Heart left ventricle (tissue), 16 donors: ENCODE measurements at regions of chr1 and their contacts with region 1.

Region 1: DNA sequence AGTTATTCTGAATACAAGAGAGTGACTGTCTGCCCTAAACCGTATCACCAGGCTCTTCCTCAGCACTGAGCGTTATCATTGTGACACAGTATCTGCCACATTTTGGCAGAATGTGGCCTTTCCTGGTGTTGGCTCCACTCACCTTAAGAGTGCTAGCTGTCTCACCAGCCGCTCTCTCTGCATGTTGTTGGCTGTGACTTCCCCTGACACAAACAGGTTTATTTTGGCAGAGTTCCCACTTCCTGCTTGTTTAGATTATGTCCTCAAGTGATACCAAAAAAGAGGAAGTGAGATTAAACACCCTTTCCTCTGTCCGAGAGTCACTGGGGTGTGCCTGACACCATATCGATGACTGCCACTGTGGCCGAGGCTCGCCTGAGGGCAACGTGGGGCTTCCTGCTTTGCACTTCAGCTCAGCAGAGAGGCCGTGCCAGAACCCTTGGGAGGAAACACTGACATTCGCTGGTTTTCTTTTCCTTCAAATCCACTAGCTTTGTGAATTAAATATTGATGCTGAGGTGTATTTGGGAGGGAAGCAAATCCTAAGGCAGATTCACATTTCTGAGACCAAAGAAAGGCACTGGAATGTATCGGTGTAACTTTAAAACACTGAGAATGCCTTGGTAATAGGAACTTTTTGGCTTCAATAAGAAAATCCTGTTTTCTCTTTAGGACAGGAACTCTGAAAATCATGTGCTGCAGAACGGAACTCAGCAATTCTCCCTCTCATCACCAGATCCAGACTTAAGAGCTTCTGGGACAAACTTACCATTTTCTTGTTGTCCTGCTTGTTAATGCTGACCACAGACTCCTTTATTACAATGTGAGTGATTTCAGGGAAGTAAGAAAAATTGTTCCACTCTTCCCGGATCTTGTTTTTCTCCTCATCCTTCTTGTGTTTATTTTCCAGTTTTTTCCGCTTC is 102.1 kb downstream of the JAK1 start:
- DNase-seq: peak; percentile 63 to 88 (median 77)
- ATAC-seq: peak; percentile 45 to 94 (median 85)
- H3K4me3 ChIP-seq: no peak overlapping the region
- H3K27ac ChIP-seq: peak overlapping the region in 9 of 12 donors; percentile 17 to 85 (median 39)
- H3K4me1 ChIP-seq: peaks cover 0 to 28% (median 5%) of the 10 kb centered on the region in 12 donors
- H3K27me3 ChIP-seq: no peaks in the 10 kb centered on the region
- CTCF ChIP-seq: no peak
- POLR2A ChIP-seq: no peak

Region 2: GRCh38 chr1:64923294-64923721 is 59.0 kb after region 1 on chr1:
- intact Hi-C with region 1: no loop called
- DNase-seq: no peak
- ATAC-seq: no peak
- H3K4me3 ChIP-seq: no peak overlapping the region
- H3K27ac ChIP-seq: no peak overlapping the region
- H3K4me1 ChIP-seq: peaks cover under 1 to 94% (median 50%) of the 10 kb centered on the region in 12 donors
- H3K27me3 ChIP-seq: no peaks in the 10 kb centered on the region
- CTCF ChIP-seq: no peak
- POLR2A ChIP-seq: no peak

Region 3: DNA sequence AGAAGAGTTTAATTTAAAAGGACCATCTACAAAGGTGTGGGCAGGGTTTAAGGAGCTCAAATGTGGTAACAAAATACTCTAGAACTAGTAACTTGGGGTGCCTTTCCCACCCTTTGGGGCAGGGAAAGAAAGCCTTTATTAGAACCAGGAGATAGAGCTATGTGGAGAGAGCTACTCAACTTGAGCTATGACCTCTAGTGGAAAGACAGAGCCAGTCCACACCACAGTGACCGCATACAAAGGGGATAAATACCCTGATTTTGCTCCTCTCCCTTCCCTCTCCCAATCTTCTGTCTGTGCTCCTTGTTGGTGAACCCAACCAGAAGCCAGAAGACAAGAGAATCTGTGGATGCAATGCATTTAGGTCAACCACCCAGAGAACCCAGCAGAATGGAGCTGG is 156.5 kb after region 1 on chr1:
- intact Hi-C with region 1: loop called in 1 of 10 experiments (anchors 5 kb)
- DNase-seq: no peak
- ATAC-seq: peak in 3 of 4 donors; percentile 55 to 73 (median 72)
- H3K4me3 ChIP-seq: no peak overlapping the region
- H3K27ac ChIP-seq: no peak overlapping the region
- H3K4me1 ChIP-seq: peaks cover 0 to 19% (median 4%) of the 10 kb centered on the region in 12 donors
- H3K27me3 ChIP-seq: no peaks in the 10 kb centered on the region
- CTCF ChIP-seq: peak in 9 of 12 donors; percentile 13 to 41 (median 30)
- POLR2A ChIP-seq: no peak